Body of pancreas (tissue), 4 donors: ENCODE measurements at regions of chr2 and their contacts with region 1.

Region 1: GRCh38 chr2:152036611-152037469 is 62.0 kb downstream of the CACNB4 start:
- DNase-seq: peak; percentile 68 to 77 (median 74)
- ATAC-seq: peak; percentile 74
- H3K4me3 ChIP-seq: no peak overlapping the region
- H3K27ac ChIP-seq: no peak overlapping the region
- H3K4me1 ChIP-seq: no peaks in the 10 kb centered on the region
- H3K27me3 ChIP-seq: no peaks in the 10 kb centered on the region
- CTCF ChIP-seq: peak; percentile 52 to 79 (median 75)
- POLR2A ChIP-seq: no peak

Region 2: GRCh38 chr2:152166633-152167032 is 129.8 kb after region 1 on chr2:
- intact Hi-C with region 1: loop called (anchors 10 kb)
- DNase-seq: no peak
- ATAC-seq: no peak
- H3K4me3 ChIP-seq: no peak overlapping the region
- H3K27ac ChIP-seq: peak overlapping the region in 1 of 4 donors; percentile 47
- H3K4me1 ChIP-seq: peaks cover 74% of the 10 kb centered on the region
- H3K27me3 ChIP-seq: no peaks in the 10 kb centered on the region
- CTCF ChIP-seq: no peak
- POLR2A ChIP-seq: no peak